ENCODE measurements at regions of chr1 and their contacts with region 1.

Region 1: GRCh38 chr1:24930204-24931145 is at the start of gene RUNX3:
- DNase-seq: peak; percentile 93 to 94 (median 94)
- H3K4me3 ChIP-seq: peak within 1 kb of the TSS; percentile 81 to 84
- H3K4me3 Mint-ChIP-seq: peak within 1 kb of the TSS; percentile 87 to 98 (median 97)
- H3K27ac ChIP-seq: peak within 1 kb of the TSS; percentile 98
- H3K27ac Mint-ChIP-seq: peak within 1 kb of the TSS; percentile 99 to 100 (median 100)
- H3K4me1 ChIP-seq: peaks cover 62% of the 10 kb centered on the region
- H3K4me1 Mint-ChIP-seq: peaks cover 20 to 81% (median 42%) of the 10 kb centered on the region in 4 donors
- H3K27me3 ChIP-seq: no peaks in the 10 kb centered on the region
- H3K27me3 Mint-ChIP-seq: no peaks in the 10 kb centered on the region
- total RNA-seq, gene RUNX3: 105 to 112 TPM

Region 2: DNA sequence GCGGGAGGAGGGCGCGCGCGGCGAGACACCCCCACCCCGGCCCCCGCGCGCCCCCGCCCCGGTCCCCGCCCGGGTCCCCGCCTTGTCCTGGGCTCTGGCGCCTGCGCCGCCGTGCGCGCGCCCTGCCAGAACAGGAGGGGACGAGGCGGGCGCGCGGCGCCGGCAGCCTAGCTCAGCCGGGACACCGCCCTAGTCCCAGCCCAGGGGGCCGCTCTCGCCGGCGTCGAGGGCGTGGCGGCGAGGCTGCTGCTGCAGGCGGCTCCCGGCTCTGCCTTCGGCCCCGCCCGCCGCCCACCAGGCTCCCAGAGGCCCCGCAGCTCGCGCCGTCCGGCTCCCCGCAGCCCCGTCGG is 427.8 kb before region 1 on chr1 and contains the start of gene RCAN3:
- CTCF ChIA-PET with region 1: no interaction called
- POLR2A ChIA-PET with region 1: interaction called, 3 read pairs
- intact Hi-C with region 1: loop called (anchors 10 kb)
- DNase-seq: peak; percentile 89 to 93 (median 90)
- H3K4me3 ChIP-seq: peak within 1 kb of the TSS; percentile 83 to 84
- H3K4me3 Mint-ChIP-seq: peak within 1 kb of the TSS; percentile 96 to 100 (median 99)
- H3K27ac ChIP-seq: peak within 1 kb of the TSS; percentile 93
- H3K27ac Mint-ChIP-seq: peak within 1 kb of the TSS; percentile 92 to 99 (median 98)
- H3K4me1 ChIP-seq: peaks cover 67% of the 10 kb centered on the region
- H3K4me1 Mint-ChIP-seq: peaks cover 43 to 83% (median 57%) of the 10 kb centered on the region in 4 donors
- H3K27me3 ChIP-seq: no peaks in the 10 kb centered on the region
- H3K27me3 Mint-ChIP-seq: no peaks in the 10 kb centered on the region
- total RNA-seq, gene RCAN3: 171 to 178 TPM

Region 3: DNA sequence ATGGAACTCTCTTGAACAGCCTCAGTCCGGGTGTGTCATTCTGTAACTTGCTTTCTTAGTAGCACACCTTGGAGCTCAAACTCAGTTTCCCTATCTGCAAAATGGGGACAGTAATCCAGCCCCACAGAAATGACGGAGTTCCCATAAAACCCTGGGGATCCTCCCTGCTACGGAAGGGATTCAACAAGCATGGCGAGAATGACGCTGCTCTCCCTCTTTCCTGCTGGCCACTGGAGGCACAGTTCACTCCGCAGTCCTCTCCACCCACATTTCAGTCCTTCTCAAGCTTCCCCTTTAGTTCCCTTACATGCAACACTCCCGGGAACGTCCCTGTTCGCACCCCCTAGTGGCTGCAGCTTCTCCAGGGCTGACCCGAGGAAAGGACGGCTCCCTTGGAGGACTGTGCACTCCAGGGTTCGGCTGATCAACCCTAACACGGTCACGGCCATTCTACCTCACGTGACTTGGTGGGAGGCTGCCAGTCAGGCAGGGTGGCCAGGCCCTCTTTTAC is 21.0 kb before region 1 on chr1:
- CTCF ChIA-PET with region 1: interaction called, 39 read pairs
- POLR2A ChIA-PET with region 1: interaction called, 335 read pairs
- intact Hi-C with region 1: loop called (anchors 1 kb)
- DNase-seq: peak in 1 of 5 donors; percentile 37
- H3K4me3 ChIP-seq: no peak overlapping the region
- H3K4me3 Mint-ChIP-seq: peak overlapping the region in 2 of 8 donors; percentile 26 to 52
- H3K27ac ChIP-seq: peak overlapping the region; percentile 77
- H3K27ac Mint-ChIP-seq: peak overlapping the region; percentile 85 to 100 (median 95)
- H3K4me1 ChIP-seq: peaks cover 68% of the 10 kb centered on the region
- H3K4me1 Mint-ChIP-seq: peaks cover 35 to 72% (median 51%) of the 10 kb centered on the region in 4 donors
- H3K27me3 ChIP-seq: no peaks in the 10 kb centered on the region
- H3K27me3 Mint-ChIP-seq: no peaks in the 10 kb centered on the region

Region 4: DNA sequence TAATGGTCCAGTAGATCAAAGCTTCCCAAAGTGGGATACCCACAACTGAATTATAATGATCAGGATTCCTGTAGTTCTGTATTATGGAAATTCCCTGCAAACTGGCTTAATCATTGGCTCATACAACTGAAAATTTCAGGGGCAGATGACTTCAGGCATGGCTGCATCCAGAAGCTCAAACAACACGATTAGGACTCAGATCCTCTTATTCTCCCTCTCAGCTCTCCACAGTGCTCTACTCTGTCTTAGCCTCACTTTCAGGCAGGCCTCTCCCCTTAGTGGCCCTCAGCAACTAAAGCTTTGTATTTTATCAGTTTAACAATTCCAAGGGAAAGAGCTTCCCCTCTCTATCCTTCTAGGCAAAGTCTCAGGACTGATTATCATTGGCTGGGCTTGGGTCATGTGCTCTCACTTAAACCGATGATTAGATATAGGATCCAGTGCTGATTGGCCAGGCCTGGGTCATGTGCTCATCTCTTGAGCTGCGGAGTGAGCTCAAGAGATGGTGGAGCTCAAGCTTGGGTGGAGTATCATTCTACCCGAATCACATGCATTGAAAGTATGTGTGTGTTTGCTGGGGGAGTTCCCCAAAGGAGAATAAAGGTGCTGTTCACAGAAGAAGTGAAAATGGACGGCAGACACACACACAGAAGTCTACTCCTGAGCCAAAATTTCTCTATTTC is 57.5 kb after region 1 on chr1:
- CTCF ChIA-PET with region 1: interaction called, 6 read pairs
- POLR2A ChIA-PET with region 1: interaction called, 38 read pairs
- intact Hi-C with region 1: no loop called
- DNase-seq: no peak
- H3K4me3 ChIP-seq: no peak overlapping the region
- H3K4me3 Mint-ChIP-seq: peak overlapping the region in 1 of 8 donors; percentile 36
- H3K27ac ChIP-seq: no peak overlapping the region
- H3K27ac Mint-ChIP-seq: peak overlapping the region in 4 of 7 donors; percentile 31 to 89 (median 60)
- H3K4me1 ChIP-seq: peaks cover 90% of the 10 kb centered on the region
- H3K4me1 Mint-ChIP-seq: peaks cover 65 to 91% (median 77%) of the 10 kb centered on the region in 4 donors
- H3K27me3 ChIP-seq: no peaks in the 10 kb centered on the region
- H3K27me3 Mint-ChIP-seq: peaks cover 0 to 2% of the 10 kb centered on the region in 2 donors

Region 5: GRCh38 chr1:25031966-25032667 is 101.6 kb after region 1 on chr1:
- CTCF ChIA-PET with region 1: interaction called, 296 read pairs
- POLR2A ChIA-PET with region 1: interaction called, 206 read pairs
- intact Hi-C with region 1: loop called (anchors 1 kb)
- DNase-seq: peak; percentile 81 to 91 (median 85)
- H3K4me3 ChIP-seq: no peak overlapping the region
- H3K4me3 Mint-ChIP-seq: peak overlapping the region; percentile 37 to 78 (median 62)
- H3K27ac ChIP-seq: peak overlapping the region; percentile 79
- H3K27ac Mint-ChIP-seq: peak overlapping the region in 6 of 7 donors; percentile 88 to 97 (median 95)
- H3K4me1 ChIP-seq: peaks cover 100% of the 10 kb centered on the region
- H3K4me1 Mint-ChIP-seq: peaks cover 4 to 62% (median 31%) of the 10 kb centered on the region in 4 donors
- H3K27me3 ChIP-seq: no peaks in the 10 kb centered on the region
- H3K27me3 Mint-ChIP-seq: no peaks in the 10 kb centered on the region

Region 6: GRCh38 chr1:25204797-25205480 is 274.5 kb after region 1 on chr1:
- CTCF ChIA-PET with region 1: no interaction called
- POLR2A ChIA-PET with region 1: no interaction called
- intact Hi-C with region 1: loop called (anchors 2 kb)
- DNase-seq: peak in 4 of 5 donors; percentile 45 to 59 (median 50)
- H3K4me3 ChIP-seq: no peak overlapping the region
- H3K4me3 Mint-ChIP-seq: no peak overlapping the region
- H3K27ac ChIP-seq: no peak overlapping the region
- H3K27ac Mint-ChIP-seq: no peak overlapping the region
- H3K4me1 ChIP-seq: no peaks in the 10 kb centered on the region
- H3K4me1 Mint-ChIP-seq: peaks cover 0 to 2% (median 0%) of the 10 kb centered on the region in 4 donors
- H3K27me3 ChIP-seq: no peaks in the 10 kb centered on the region
- H3K27me3 Mint-ChIP-seq: peaks cover under 1 to 9% of the 10 kb centered on the region in 2 donors